GM12878 (cell line): ENCODE measurements at regions of chr13 and their contacts with region 1.

Region 1: GRCh38 chr13:39144941-39145533 is 106.8 kb downstream of the NHLRC3 start:
- DNase-seq: no peak
- ATAC-seq: peak; percentile 80
- H3K4me3 ChIP-seq: no peak overlapping the region
- H3K27ac ChIP-seq: no peak overlapping the region
- H3K4me1 ChIP-seq: no peaks in the 10 kb centered on the region
- H3K27me3 ChIP-seq: no peaks in the 10 kb centered on the region
- CTCF ChIP-seq: peak; percentile 65 to 86 (median 69)
- EP300 ChIP-seq: no peak
- POLR2A ChIP-seq: no peak
- RAD21 ChIP-seq: peak; percentile 80

Region 2: DNA sequence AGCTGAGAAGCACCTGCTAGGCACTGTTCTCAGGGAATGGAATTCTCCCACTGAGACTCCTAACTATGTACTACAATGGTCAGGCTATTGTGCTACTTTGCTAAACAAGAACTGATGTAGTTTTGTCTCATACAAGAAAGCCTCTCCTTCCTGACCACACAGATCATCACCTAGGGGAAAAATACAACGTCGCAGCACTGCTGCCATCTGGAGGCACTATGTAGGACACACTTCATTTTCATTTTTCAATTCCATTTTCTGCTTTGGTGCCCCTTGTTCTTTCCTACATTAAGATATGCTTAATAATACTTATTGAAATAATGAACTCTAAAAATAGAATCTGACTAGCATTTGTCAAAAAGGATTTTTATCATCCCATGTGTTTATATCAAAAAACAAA is 128.2 kb before region 1 on chr13:
- CTCF ChIA-PET with region 1: no interaction called
- POLR2A ChIA-PET with region 1: no interaction called
- RAD21 ChIA-PET with region 1: no interaction called
- SMC1A ChIA-PET with region 1: no interaction called
- in situ Hi-C with region 1: no loop called
- intact Hi-C with region 1: no loop called
- DNase-seq: no peak
- ATAC-seq: peak; percentile 86
- H3K4me3 ChIP-seq: no peak overlapping the region
- H3K27ac ChIP-seq: peak overlapping the region; percentile 20; the same call in 1 of the 2 replicates
- H3K4me1 ChIP-seq: no peaks in the 10 kb centered on the region
- H3K27me3 ChIP-seq: no peaks in the 10 kb centered on the region
- CTCF ChIP-seq: peak; percentile 61 to 66 (median 65)
- EP300 ChIP-seq: no peak
- POLR2A ChIP-seq: no peak
- RAD21 ChIP-seq: peak; percentile 52

Region 3: DNA sequence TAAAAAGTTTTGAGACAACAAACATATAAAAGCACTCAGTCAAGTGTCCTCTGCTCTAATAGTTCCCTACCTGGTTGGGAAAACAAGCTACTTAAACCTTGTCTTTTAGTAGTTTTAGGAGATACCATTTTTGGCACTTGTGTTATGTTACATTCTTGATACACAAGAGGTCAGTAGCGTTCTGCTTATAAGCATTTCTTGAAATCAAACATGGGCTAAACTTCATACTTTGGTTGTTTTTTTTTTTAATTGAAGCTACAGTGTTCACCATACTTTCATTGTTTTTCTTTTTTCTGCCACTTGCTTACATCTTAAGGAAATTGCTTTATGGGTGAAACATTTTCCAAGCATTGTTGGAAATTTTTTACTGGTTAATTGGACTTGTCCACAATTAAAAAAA is 93.9 kb before region 1 on chr13:
- CTCF ChIA-PET with region 1: interaction called, 6 read pairs
- POLR2A ChIA-PET with region 1: no interaction called
- RAD21 ChIA-PET with region 1: interaction called, 4 read pairs
- SMC1A ChIA-PET with region 1: interaction called, 11 read pairs
- in situ Hi-C with region 1: no loop called
- intact Hi-C with region 1: no loop called
- DNase-seq: no peak
- ATAC-seq: peak; percentile 54
- H3K4me3 ChIP-seq: no peak overlapping the region
- H3K27ac ChIP-seq: no peak overlapping the region
- H3K4me1 ChIP-seq: no peaks in the 10 kb centered on the region
- H3K27me3 ChIP-seq: no peaks in the 10 kb centered on the region
- CTCF ChIP-seq: peak; percentile 27 to 55 (median 31); a peak in 4 of 6 replicates
- EP300 ChIP-seq: no peak
- POLR2A ChIP-seq: no peak
- RAD21 ChIP-seq: peak; percentile 76

Region 4: DNA sequence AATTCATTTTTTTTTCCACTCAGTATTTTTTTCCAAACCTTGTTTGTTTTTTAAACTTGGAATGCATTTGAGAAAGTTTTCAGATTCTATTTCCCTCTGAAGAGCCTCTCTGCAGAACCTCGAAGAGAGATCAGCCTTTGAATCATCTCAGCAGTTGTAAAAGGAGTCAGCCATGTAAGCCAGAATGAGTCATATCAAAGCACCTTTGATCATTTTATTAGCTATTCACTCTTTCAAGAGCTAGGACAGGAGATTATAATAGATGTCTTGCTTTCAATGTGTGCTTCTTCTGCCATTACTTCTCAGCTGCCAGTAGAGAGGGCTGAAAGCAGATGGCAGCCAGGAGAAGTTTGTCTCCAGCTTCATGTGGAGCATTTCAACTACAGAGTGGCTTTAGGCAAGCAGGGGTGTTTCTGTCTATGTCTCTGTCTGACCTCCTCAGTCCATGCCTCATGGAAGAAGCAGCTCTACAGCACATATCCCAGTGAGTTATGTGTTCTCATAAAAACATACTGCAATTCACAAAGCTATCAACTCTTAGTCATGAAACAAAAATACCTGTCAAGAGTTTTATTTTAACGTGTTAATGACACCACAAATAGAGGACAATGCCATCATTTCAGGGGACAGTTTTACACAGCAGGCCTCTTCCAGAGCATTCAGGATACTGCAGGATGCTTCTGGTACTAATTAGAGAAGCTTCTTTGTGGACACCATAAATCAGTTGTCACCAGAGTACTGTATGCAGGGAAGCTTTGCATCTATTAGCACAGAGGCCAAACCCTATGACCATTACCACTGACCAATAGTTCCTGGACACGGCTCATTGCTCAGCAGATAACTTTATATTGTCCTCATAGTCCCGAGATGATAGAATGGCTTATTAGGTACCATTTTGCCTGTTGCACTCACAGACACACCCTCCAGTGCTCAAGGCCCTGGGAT is 12.5 kb before region 1 on chr13:
- CTCF ChIA-PET with region 1: interaction called, 17 read pairs
- POLR2A ChIA-PET with region 1: no interaction called
- RAD21 ChIA-PET with region 1: no interaction called
- SMC1A ChIA-PET with region 1: interaction called, 5 read pairs
- in situ Hi-C with region 1: no loop called
- intact Hi-C with region 1: no loop called
- DNase-seq: no peak
- ATAC-seq: no peak
- H3K4me3 ChIP-seq: no peak overlapping the region
- H3K27ac ChIP-seq: no peak overlapping the region
- H3K4me1 ChIP-seq: no peaks in the 10 kb centered on the region
- H3K27me3 ChIP-seq: peaks cover 0 to 2% of the 10 kb centered on the region in 2 experiments; a peak in 2 of 4 replicates
- CTCF ChIP-seq: no peak
- EP300 ChIP-seq: no peak
- POLR2A ChIP-seq: no peak
- RAD21 ChIP-seq: no peak

Region 5: DNA sequence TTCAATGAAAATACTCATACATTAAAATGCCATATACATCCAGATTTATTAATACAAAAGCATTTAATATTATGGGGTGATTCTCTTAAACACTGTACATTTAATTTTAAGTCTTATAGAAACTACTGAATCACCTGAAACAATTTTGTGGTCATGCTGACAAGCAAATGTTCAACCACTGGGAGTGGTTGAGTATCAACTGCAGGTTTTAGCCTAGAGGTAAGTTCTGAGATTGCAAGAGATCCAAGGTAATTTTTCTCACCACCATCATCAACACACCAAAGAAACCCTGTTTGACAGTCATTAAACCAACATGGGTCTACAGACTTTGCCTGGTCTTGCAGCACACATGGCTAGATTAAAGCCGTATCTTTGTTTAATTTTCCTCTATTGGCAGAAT is 261.7 kb after region 1 on chr13:
- CTCF ChIA-PET with region 1: interaction called, 4 read pairs
- POLR2A ChIA-PET with region 1: no interaction called
- RAD21 ChIA-PET with region 1: no interaction called
- SMC1A ChIA-PET with region 1: no interaction called
- in situ Hi-C with region 1: no loop called
- intact Hi-C with region 1: loop called (anchors 10 kb)
- DNase-seq: peak; percentile 9
- ATAC-seq: peak; percentile 93
- H3K4me3 ChIP-seq: no peak overlapping the region
- H3K27ac ChIP-seq: no peak overlapping the region
- H3K4me1 ChIP-seq: no peaks in the 10 kb centered on the region
- H3K27me3 ChIP-seq: no peaks in the 10 kb centered on the region
- CTCF ChIP-seq: peak in 2 of 3 experiments; percentile 20 to 31; a peak in 1 of 6 replicates
- EP300 ChIP-seq: no peak
- POLR2A ChIP-seq: no peak
- RAD21 ChIP-seq: no peak

Region 6: GRCh38 chr13:39676315-39676876 is 531.4 kb after region 1 on chr13:
- CTCF ChIA-PET with region 1: interaction called, 5 read pairs
- POLR2A ChIA-PET with region 1: no interaction called
- RAD21 ChIA-PET with region 1: interaction called, 3 read pairs
- SMC1A ChIA-PET with region 1: interaction called, 3 read pairs
- in situ Hi-C with region 1: no loop called
- intact Hi-C with region 1: loop called (anchors 5 kb)
- DNase-seq: no peak
- ATAC-seq: peak; percentile 48; the same call in 2 of the 3 replicates
- H3K4me3 ChIP-seq: no peak overlapping the region
- H3K27ac ChIP-seq: no peak overlapping the region
- H3K4me1 ChIP-seq: no peaks in the 10 kb centered on the region
- H3K27me3 ChIP-seq: no peaks in the 10 kb centered on the region
- CTCF ChIP-seq: peak; percentile 21 to 50 (median 38); a peak in 4 of 6 replicates
- EP300 ChIP-seq: no peak
- POLR2A ChIP-seq: no peak
- RAD21 ChIP-seq: peak; percentile 35; the same call in 1 of the 2 replicates